ENCODE measurements at regions of chr7 and their contacts with region 1.

Region 1: GRCh38 chr7:134778941-134779740 is at the start of gene CALD1:
- DNase-seq: peak; percentile 77 to 87
- H3K4me3 ChIP-seq: peak within 1 kb of the TSS; percentile 46 to 78 (median 56); a peak in 7 of 8 replicates
- H3K27ac ChIP-seq: peak within 1 kb of the TSS; percentile 63; the same call in 1 of the 2 replicates
- H3K4me1 ChIP-seq: peaks cover 3 to 16% (median 8%) of the 10 kb centered on the region in 4 experiments; a peak in 5 of 7 replicates
- H3K27me3 ChIP-seq: no peaks in the 10 kb centered on the region
- CTCF ChIP-seq: no peak
- EP300 ChIP-seq: peak in 1 of 2 experiments; percentile 23; a peak in 1 of 3 replicates
- POLR2A ChIP-seq: peak; percentile 79 to 96
- RAD21 ChIP-seq: no peak
- total RNA-seq, gene CALD1: 170 and 177 TPM in 2 replicates

Region 2: DNA sequence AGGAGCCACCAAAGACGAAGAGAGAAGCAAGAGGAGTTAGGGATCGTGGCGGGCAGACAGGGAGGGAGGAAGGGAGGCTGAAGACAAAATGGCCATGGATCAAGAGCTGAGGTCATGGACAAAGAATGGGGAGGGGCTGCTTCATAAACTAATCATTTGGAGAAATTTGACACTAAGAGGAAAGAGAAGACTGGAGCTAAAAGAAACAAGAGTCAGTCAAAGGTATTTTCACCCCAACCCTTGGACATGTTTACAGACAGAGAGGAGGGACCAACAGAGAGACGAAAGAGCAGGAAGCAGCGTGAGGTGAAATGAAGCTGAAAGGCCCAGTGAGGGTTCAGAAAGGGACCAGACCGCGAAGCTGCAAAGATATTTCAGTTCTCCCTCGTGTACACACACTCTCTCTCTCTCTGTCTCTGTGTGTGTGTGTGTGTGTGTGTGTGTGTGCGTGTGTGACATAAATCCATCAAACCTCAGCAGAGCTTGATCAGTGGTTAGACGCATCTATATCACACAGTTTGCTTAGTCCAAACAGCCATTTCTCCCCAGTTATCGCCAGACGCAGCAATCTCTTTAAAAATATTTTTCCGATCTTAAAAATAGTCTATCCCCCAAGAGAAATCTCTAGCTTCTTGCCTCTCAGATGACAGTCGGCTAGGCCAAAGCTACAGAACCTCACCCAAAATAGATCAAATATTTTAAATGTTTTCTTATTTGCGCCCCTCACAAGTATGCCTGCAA is 12.2 kb before region 1 on chr7:
- CTCF ChIA-PET with region 1: no interaction called
- POLR2A ChIA-PET with region 1: interaction called, 10 read pairs
- DNase-seq: no peak
- H3K4me3 ChIP-seq: no peak overlapping the region
- H3K27ac ChIP-seq: no peak overlapping the region
- H3K4me1 ChIP-seq: peaks cover 0 to 2% (median 0%) of the 10 kb centered on the region in 4 experiments; a peak in 1 of 7 replicates
- H3K27me3 ChIP-seq: no peaks in the 10 kb centered on the region; a peak in 1 of 7 replicates
- CTCF ChIP-seq: no peak
- EP300 ChIP-seq: no peak
- POLR2A ChIP-seq: no peak
- RAD21 ChIP-seq: no peak

Region 3: GRCh38 chr7:134789967-134790685 is 11.0 kb after region 1 on chr7:
- CTCF ChIA-PET with region 1: interaction called, 3 read pairs
- POLR2A ChIA-PET with region 1: interaction called, 14 read pairs
- DNase-seq: no peak
- H3K4me3 ChIP-seq: no peak overlapping the region
- H3K27ac ChIP-seq: no peak overlapping the region
- H3K4me1 ChIP-seq: peaks cover 0 to 5% (median 3%) of the 10 kb centered on the region in 4 experiments; a peak in 4 of 7 replicates
- H3K27me3 ChIP-seq: no peaks in the 10 kb centered on the region
- CTCF ChIP-seq: no peak
- EP300 ChIP-seq: no peak
- POLR2A ChIP-seq: peak in 1 of 2 experiments; percentile 52; a peak in 1 of 3 replicates
- RAD21 ChIP-seq: no peak

Region 4: DNA sequence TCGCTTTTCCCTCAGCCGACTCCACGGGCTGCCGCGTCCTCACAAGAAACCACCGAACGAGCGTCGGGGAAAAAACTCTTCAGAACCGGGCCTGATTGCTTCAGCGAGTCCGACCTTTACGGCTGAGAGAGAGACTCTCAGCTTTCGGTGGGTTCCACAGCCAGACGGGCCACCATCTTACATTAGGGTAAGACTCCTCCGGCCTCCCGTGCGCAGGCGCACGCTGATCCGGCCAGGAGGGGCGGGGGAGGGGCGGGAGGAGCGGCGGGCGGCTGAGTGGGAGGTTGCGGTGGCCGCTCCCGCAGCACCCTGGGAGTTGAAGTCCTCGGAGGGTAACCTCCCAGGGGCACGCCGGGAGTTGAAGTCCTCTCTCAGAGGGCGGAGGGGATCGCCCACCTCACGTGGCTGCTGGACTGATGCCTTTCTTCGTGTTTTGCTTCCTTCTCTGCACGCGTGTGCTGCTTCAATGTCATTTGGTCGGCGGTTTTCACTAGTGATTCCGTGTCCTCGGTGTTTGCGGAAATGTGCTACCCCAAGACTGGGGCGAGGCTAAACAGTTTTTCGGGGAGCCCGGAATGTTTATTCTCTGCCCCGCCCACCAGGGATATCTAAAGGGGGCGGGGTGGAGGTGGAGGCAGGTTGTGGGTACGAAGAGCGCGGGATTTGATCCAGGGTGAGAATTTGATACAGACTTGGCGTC is 730.9 kb after region 1 on chr7 and contains the start of gene CNOT4:
- CTCF ChIA-PET with region 1: no interaction called
- POLR2A ChIA-PET with region 1: no interaction called
- DNase-seq: peak; percentile 89
- H3K4me3 ChIP-seq: peak within 1 kb of the TSS; percentile 77 to 96 (median 92)
- H3K27ac ChIP-seq: peak within 1 kb of the TSS; percentile 96
- H3K4me1 ChIP-seq: peaks cover 0 to 2% (median 0%) of the 10 kb centered on the region in 4 experiments; a peak in 1 of 7 replicates
- H3K27me3 ChIP-seq: no peaks in the 10 kb centered on the region
- CTCF ChIP-seq: peak in 1 of 3 experiments; percentile 1; a peak in 1 of 4 replicates
- EP300 ChIP-seq: no peak; a peak in 1 of 3 replicates
- POLR2A ChIP-seq: peak; percentile 92 to 94
- RAD21 ChIP-seq: no peak
- total RNA-seq, gene CNOT4: 24.3 and 25.8 TPM in 2 replicates